ENCODE measurements at regions of chr18 and their contacts with region 1.

Region 1: DNA sequence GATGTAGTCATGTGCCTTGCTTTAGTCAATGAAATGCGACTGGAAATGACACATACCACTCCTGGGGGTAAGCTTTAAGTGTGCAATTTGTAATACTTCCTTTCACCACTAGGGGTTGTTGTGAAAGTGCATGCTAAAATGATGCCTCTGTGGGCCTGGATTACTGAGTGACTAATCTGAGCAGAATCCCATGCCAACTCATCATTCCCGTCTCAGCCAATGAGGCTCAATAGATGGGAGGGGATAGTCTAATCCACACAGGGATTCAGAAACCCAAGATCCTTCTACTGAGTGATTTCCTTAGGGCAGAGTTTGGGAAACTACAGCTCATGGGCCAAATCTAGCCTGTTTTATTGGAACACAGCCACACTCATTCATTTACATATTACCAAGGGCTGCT is 54.0 kb downstream of the HRH4 start:
- DNase-seq: peak; percentile 52 to 73 (median 71)
- H3K4me3 ChIP-seq: no peak overlapping the region
- H3K27ac ChIP-seq: no peak overlapping the region
- H3K4me1 ChIP-seq: no peaks in the 10 kb centered on the region
- H3K27me3 ChIP-seq: no peaks in the 10 kb centered on the region

Region 2: DNA sequence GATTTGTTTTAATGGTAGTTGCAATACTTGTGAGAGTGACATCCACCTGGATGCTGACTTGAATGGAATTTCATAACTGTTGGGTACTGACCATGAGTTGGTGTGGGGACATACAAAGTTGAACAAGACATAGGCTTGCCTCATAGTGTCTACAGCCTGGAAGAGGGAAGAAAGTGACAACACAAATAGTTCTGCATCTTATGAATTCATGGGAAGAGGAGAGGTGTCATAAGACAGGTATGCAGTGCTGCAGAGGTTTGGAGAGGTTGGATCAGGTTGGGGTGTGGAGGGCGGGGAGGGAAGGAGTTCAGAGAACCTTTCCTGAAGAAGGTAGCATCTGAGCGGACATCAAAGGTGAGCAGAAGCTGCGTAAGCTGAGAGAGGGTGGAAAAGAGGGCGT is 10.0 kb before region 1 on chr18:
- CTCF ChIA-PET with region 1: interaction called, 11 read pairs
- POLR2A ChIA-PET with region 1: no interaction called
- DNase-seq: no peak
- H3K4me3 ChIP-seq: no peak overlapping the region
- H3K27ac ChIP-seq: no peak overlapping the region
- H3K4me1 ChIP-seq: no peaks in the 10 kb centered on the region
- H3K27me3 ChIP-seq: no peaks in the 10 kb centered on the region

Region 3: DNA sequence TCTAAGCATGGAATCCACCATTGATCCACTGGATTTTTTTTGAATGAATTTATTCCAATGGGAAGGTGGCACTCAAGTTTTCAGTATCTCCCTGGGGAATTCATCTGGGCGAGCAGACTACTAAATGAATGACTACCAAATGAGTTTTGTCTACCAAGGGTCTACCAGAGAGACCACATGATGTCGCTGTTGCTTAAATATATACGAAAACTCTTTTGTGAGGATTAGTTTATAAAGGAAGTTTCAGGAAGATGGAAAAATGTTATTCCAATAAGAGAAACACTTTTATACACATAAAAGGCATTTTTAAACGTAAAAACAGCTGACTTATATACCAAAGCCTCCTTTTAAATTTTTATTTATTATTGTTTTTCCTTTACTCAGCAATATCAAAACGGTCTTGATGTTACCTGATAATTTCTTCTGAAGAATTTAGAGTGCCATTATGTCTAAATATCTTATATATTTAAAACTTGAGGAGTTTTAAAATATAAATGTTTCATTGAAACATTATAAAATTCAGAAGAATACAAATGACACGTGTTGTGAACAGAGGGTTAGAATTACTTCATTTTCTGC is 85.7 kb after region 1 on chr18:
- CTCF ChIA-PET with region 1: no interaction called
- POLR2A ChIA-PET with region 1: no interaction called
- DNase-seq: peak; percentile 39 to 65 (median 59)
- H3K4me3 ChIP-seq: no peak overlapping the region
- H3K27ac ChIP-seq: no peak overlapping the region
- H3K4me1 ChIP-seq: no peaks in the 10 kb centered on the region
- H3K27me3 ChIP-seq: no peaks in the 10 kb centered on the region

Measured in common myeloid progenitor, CD34-positive (primary cell).